Activated CD4-positive, alpha-beta T cell treated with anti-CD3 and anti-CD28 coated beads for 36 hours (primary cell): ENCODE measurements at regions of chr1 and their contacts with region 1.

Region 1: GRCh38 chr1:45339789-45340570 is at the starts of genes MUTYH and TOE1:
- DNase-seq: peak; percentile 98
- ATAC-seq: peak; percentile 86
- H3K4me3 Mint-ChIP-seq: peak within 1 kb of the TSS; percentile 100
- H3K27ac Mint-ChIP-seq: peak within 1 kb of the TSS; percentile 100
- H3K4me1 Mint-ChIP-seq: peaks cover 27% of the 10 kb centered on the region
- H3K27me3 Mint-ChIP-seq: no peaks in the 10 kb centered on the region
- total RNA-seq, gene MUTYH: 48.6 to 53.7 TPM
- total RNA-seq, gene TOE1: 29.8 to 42.3 TPM

Region 2: DNA sequence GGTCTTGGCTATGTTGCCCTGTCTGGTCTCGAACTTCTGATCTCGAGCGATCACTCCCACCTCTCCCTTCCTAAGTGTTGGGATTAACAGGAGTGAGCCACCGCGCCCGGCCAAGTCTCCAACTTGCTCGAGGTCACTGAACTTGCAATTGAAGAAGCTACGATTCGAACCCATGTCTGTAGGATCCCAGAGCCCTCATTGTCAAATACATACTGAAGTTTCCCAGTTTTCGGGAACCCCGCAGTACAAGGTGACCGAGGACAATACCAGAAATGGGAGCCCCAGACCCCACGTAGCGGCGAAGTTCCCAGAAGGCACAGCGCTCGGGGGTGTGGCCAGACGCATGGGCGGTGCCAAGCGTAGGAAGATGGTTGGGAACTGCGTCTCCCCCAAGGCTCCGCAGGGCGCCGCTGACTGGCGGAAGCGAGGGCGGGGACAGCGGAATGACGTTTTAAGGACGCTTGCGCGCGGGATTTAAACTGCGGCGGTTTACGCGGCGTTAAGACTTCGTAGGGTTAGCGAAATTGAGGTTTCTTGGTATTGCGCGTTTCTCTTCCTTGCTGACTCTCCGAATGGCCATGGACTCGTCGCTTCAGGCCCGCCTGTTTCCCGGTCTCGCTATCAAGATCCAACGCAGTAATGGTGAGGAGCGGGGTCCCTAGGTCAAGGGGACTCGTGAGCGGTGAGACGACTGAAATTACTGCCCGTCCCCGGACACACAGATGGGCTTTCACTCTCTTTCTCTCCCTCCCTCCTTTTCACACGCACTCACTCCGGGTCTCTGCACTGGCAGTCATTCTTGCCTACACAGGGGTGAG is 600.4 kb before region 1 on chr1 and contains the start of gene KIF2C:
- CTCF ChIA-PET with region 1: no interaction called
- POLR2A ChIA-PET with region 1: no interaction called
- intact Hi-C with region 1: loop called in 1 of 2 experiments (anchors 1 kb)
- DNase-seq: peak; percentile 99
- ATAC-seq: peak; percentile 98
- H3K4me3 Mint-ChIP-seq: peak within 1 kb of the TSS; percentile 98
- H3K27ac Mint-ChIP-seq: peak within 1 kb of the TSS; percentile 94
- H3K4me1 Mint-ChIP-seq: peaks cover 26% of the 10 kb centered on the region
- H3K27me3 Mint-ChIP-seq: no peaks in the 10 kb centered on the region
- total RNA-seq, gene KIF2C: 101 to 119 TPM

Region 3: DNA sequence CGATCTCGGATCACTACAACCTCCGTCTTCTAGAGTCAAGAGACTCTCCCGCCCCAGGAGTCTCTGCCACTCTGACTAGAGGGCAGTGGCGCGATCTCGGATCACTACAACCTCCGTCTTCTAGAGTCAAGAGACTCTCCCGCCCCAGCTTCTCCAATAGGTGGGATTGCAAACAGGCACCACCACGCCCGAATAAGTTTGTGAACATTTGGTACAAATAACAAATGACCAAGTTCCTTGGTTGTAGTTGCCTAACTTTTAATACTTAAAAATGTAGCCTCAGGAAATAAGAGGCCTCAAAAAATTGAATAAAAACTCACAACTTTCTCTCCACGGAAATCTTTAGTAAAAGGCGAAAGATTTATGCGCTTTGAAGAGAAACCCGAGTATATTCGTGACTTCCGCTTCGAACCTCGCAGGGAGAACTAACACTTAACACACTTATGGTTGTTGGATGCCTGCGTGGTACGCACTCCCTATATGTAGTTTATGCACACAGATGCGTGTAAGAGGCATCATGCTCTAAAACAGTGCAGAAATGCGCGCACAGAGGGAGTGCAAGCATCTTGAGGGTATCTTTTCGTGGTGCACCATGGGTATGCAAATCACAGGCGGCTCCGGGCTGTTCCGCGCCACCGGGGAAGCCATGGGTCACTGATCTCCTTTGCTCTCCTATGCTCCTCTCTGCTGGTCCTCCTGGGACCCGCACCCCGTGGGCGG is 520.2 kb before region 1 on chr1:
- CTCF ChIA-PET with region 1: no interaction called
- POLR2A ChIA-PET with region 1: interaction called, 29 read pairs
- intact Hi-C with region 1: no loop called
- DNase-seq: peak; percentile 88
- ATAC-seq: peak; percentile 88
- H3K4me3 Mint-ChIP-seq: peak overlapping the region; percentile 85
- H3K27ac Mint-ChIP-seq: peak overlapping the region; percentile 100
- H3K4me1 Mint-ChIP-seq: peaks cover 37% of the 10 kb centered on the region
- H3K27me3 Mint-ChIP-seq: no peaks in the 10 kb centered on the region

Region 4: GRCh38 chr1:45326627-45327623 is 13.1 kb before region 1 on chr1 and contains the start of gene HPDL:
- CTCF ChIA-PET with region 1: interaction called, 9 read pairs
- POLR2A ChIA-PET with region 1: interaction called, 36 read pairs
- intact Hi-C with region 1: loop called (anchors 1 kb)
- DNase-seq: peak; percentile 84
- ATAC-seq: peak; percentile 87
- H3K4me3 Mint-ChIP-seq: peak within 1 kb of the TSS; percentile 82
- H3K27ac Mint-ChIP-seq: peak within 1 kb of the TSS; percentile 80
- H3K4me1 Mint-ChIP-seq: peaks cover 23% of the 10 kb centered on the region
- H3K27me3 Mint-ChIP-seq: no peaks in the 10 kb centered on the region
- total RNA-seq, gene HPDL: 12.7 to 17.9 TPM

Region 5: GRCh38 chr1:45521398-45522323 is 181.7 kb after region 1 on chr1 and contains the start of gene PRDX1:
- CTCF ChIA-PET with region 1: interaction called, 3 read pairs
- POLR2A ChIA-PET with region 1: interaction called, 21 read pairs
- intact Hi-C with region 1: loop called in 1 of 2 experiments (anchors 1 kb)
- DNase-seq: peak; percentile 98
- ATAC-seq: peak; percentile 89
- H3K4me3 Mint-ChIP-seq: peak within 1 kb of the TSS; percentile 96
- H3K27ac Mint-ChIP-seq: peak within 1 kb of the TSS; percentile 94
- H3K4me1 Mint-ChIP-seq: peaks cover 47% of the 10 kb centered on the region
- H3K27me3 Mint-ChIP-seq: peaks cover 4% of the 10 kb centered on the region
- total RNA-seq, gene PRDX1: 473 to 580 TPM